PC-3 (cell line): ENCODE measurements at regions of chr12 and their contacts with region 1.

Region 1: GRCh38 chr12:50246873-50247612 is 36.3 kb downstream of the LIMA1 start:
- DNase-seq: peak; percentile 99
- ATAC-seq: peak; percentile 84
- H3K4me3 ChIP-seq: no peak overlapping the region
- H3K27ac ChIP-seq: peak overlapping the region; percentile 96
- H3K4me1 ChIP-seq: peaks cover 69% of the 10 kb centered on the region
- H3K27me3 ChIP-seq: no peaks in the 10 kb centered on the region
- CTCF ChIP-seq: no peak

Region 2: DNA sequence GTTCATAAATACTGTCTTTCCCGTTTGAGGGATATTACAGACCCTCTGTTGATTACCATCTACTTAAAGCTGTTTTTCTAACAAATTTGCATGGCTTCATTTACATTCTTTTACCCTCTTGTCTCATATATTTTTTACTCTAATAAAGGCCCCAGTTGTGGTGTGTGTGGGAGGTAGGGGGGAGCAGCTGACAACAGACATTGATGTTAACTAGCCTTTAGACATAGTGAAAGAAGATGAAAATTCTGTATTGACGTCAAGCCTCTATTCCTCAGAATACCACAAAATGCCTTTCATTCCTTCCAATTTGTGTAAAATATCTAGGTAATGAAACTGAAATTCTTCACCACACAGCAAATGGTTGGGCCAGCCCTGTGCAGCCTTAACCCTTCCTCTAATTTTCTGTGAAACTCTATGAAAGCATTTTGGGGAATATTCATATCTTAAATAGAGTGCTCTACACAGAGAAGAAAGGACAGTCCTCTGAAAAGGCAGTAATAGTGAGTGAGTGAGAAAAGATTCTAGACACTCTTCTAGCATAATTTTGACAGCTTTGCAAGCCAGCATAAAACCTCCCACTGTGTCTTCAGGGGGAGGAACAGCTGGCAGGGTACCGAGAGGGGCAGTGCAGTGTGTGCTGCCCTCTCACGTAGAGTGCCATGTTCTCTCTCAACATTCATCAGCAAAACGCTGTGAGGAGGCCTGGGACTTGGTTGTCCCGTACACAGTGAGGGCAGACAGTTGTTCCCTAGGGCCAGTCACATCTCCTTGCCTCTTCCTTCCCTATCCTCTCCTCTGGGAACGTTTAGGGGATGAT is 59.8 kb before region 1 on chr12:
- CTCF ChIA-PET with region 1: no interaction called
- POLR2A ChIA-PET with region 1: no interaction called
- intact Hi-C with region 1: loop called (anchors 5 kb)
- DNase-seq: no peak
- ATAC-seq: no peak
- H3K4me3 ChIP-seq: no peak overlapping the region
- H3K27ac ChIP-seq: peak overlapping the region; percentile 2; the same call in 1 of the 2 replicates
- H3K4me1 ChIP-seq: peaks cover 26% of the 10 kb centered on the region
- H3K27me3 ChIP-seq: no peaks in the 10 kb centered on the region
- CTCF ChIP-seq: no peak

Region 3: GRCh38 chr12:50195832-50196231 is 51.2 kb before region 1 on chr12:
- CTCF ChIA-PET with region 1: no interaction called
- POLR2A ChIA-PET with region 1: interaction called, 5 read pairs
- intact Hi-C with region 1: loop called (anchors 5 kb)
- DNase-seq: peak; percentile 49
- ATAC-seq: peak; percentile 88
- H3K4me3 ChIP-seq: no peak overlapping the region
- H3K27ac ChIP-seq: peak overlapping the region; percentile 62
- H3K4me1 ChIP-seq: peaks cover 45% of the 10 kb centered on the region
- H3K27me3 ChIP-seq: no peaks in the 10 kb centered on the region
- CTCF ChIP-seq: no peak

Region 4: DNA sequence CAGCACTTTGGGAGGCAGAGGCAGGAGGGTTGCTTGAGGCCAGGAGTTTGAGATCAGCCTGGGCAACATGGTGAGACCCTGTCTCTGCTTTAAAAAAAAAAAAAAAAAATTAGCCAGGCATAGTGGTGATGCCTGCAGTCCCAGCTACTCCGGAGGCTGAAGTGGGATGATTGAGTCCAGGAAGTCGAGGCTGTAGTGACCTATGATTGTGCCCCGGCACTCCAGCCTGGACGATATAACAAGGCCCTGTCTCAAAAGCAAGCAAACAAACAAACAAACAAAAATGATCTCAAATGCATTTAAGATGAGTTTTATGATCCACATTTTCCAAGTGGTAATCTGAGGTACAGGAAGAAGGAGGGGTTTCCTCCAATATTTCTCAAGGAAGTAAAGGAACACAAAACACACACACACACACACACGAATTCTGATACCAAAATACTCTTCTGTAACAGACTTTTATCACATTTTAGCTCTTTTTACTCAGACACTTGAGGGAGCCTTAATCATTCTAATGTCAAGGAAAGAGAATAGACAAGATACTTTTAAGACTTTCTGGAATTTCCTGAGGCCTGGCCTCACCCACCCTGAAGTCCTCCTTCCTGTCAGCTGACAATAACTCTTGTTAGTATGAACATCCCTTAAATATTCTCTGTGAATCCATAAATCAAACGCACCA is 35.5 kb before region 1 on chr12:
- CTCF ChIA-PET with region 1: no interaction called
- POLR2A ChIA-PET with region 1: no interaction called
- intact Hi-C with region 1: no loop called
- DNase-seq: peak; percentile 35
- ATAC-seq: peak; percentile 56
- H3K4me3 ChIP-seq: no peak overlapping the region
- H3K27ac ChIP-seq: peak overlapping the region; percentile 16
- H3K4me1 ChIP-seq: peaks cover 42% of the 10 kb centered on the region
- H3K27me3 ChIP-seq: no peaks in the 10 kb centered on the region
- CTCF ChIP-seq: no peak

Region 5: DNA sequence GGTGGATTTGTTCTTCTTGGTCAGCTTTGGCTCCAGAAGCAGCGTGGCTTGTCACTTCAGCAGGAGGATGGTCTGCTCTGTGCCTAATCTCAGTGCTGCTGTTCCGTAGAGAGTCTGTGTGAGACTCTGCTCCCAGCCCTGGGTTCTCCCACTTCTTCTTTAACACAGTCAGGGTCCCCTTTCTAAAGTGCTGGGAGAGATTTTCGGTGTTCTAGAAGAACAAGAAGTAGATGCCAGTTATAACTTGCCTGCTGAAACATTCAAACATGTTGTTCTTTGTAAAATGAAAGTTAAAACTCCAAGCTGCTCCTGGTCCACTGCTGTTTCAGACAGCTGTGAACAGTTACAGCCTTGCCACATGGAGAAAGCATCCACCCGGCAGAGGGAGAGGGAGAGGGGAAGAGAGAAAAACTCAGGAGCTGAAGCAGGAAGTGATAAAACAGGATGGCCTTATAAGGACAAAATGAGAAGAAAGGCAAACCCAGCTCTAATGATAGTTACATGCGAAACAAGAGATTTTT is 24.7 kb before region 1 on chr12:
- CTCF ChIA-PET with region 1: no interaction called
- POLR2A ChIA-PET with region 1: interaction called, 10 read pairs
- intact Hi-C with region 1: no loop called
- DNase-seq: peak; percentile 57
- ATAC-seq: peak; percentile 36
- H3K4me3 ChIP-seq: peak overlapping the region; percentile 57
- H3K27ac ChIP-seq: peak overlapping the region; percentile 91
- H3K4me1 ChIP-seq: peaks cover 71% of the 10 kb centered on the region
- H3K27me3 ChIP-seq: no peaks in the 10 kb centered on the region
- CTCF ChIP-seq: peak; percentile 16; the same call in 1 of the 2 replicates

Region 6: DNA sequence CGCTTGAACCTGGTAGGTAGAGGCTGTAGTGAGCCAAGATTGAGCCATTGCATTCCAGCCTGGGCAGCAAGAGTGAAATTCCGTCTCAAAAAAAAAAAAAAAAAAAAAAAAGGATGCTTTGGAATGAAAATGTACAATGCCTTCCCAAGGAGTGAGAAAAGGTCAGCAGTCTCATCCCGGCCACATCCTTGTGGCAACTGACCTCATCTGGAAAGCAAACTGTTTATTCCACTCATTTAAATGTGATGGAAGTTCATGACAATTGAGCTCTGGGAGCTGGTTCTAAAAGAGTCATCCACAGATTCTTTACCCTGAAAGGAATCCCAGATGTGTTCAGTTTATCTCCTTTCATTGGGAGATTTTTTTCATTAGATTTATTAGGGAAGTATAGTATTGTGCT is 55.6 kb after region 1 on chr12:
- CTCF ChIA-PET with region 1: no interaction called
- POLR2A ChIA-PET with region 1: no interaction called
- intact Hi-C with region 1: loop called (anchors 2 kb)
- DNase-seq: peak; percentile 30
- ATAC-seq: peak; percentile 32; the same call in 1 of the 2 replicates
- H3K4me3 ChIP-seq: no peak overlapping the region
- H3K27ac ChIP-seq: no peak overlapping the region
- H3K4me1 ChIP-seq: peaks cover 20% of the 10 kb centered on the region
- H3K27me3 ChIP-seq: no peaks in the 10 kb centered on the region
- CTCF ChIP-seq: no peak